B cell (primary cell): ENCODE measurements at regions of chr2 and their contacts with region 1.

Region 1: GRCh38 chr2:74168739-74169138 is 9.9 kb downstream of the MOB1A start:
- DNase-seq: no peak
- ATAC-seq: no peak
- H3K4me3 ChIP-seq: no peak overlapping the region
- H3K4me3 Mint-ChIP-seq: no peak overlapping the region
- H3K27ac ChIP-seq: no peak overlapping the region
- H3K27ac Mint-ChIP-seq: peak overlapping the region; percentile 1
- H3K4me1 ChIP-seq: peaks cover 13% of the 10 kb centered on the region in 2 donors
- H3K4me1 Mint-ChIP-seq: peaks cover 20% of the 10 kb centered on the region
- H3K27me3 ChIP-seq: no peaks in the 10 kb centered on the region
- H3K27me3 Mint-ChIP-seq: no peaks in the 10 kb centered on the region
- CTCF ChIP-seq: no peak

Region 2: GRCh38 chr2:73431037-73431436 is 737.7 kb before region 1 on chr2:
- CTCF ChIA-PET with region 1: no interaction called
- POLR2A ChIA-PET with region 1: no interaction called
- intact Hi-C with region 1: no loop called
- DNase-seq: no peak
- ATAC-seq: no peak
- H3K4me3 ChIP-seq: no peak overlapping the region
- H3K4me3 Mint-ChIP-seq: no peak overlapping the region
- H3K27ac ChIP-seq: no peak overlapping the region
- H3K27ac Mint-ChIP-seq: no peak overlapping the region
- H3K4me1 ChIP-seq: no peaks in the 10 kb centered on the region
- H3K4me1 Mint-ChIP-seq: no peaks in the 10 kb centered on the region
- H3K27me3 ChIP-seq: no peaks in the 10 kb centered on the region
- H3K27me3 Mint-ChIP-seq: no peaks in the 10 kb centered on the region
- CTCF ChIP-seq: no peak

Region 3: GRCh38 chr2:74206180-74206688 is 37.5 kb after region 1 on chr2:
- CTCF ChIA-PET with region 1: interaction called, 4 read pairs
- POLR2A ChIA-PET with region 1: no interaction called
- intact Hi-C with region 1: loop called (anchors 5 kb)
- DNase-seq: peak; percentile 69
- ATAC-seq: peak; percentile 70
- H3K4me3 ChIP-seq: peak overlapping the region in 3 of 5 experiments; percentile 0 to 17 (median 5)
- H3K4me3 Mint-ChIP-seq: peak overlapping the region; percentile 47
- H3K27ac ChIP-seq: peak overlapping the region; percentile 76 to 80
- H3K27ac Mint-ChIP-seq: peak overlapping the region; percentile 88
- H3K4me1 ChIP-seq: peaks cover 24 to 26% of the 10 kb centered on the region in 2 donors
- H3K4me1 Mint-ChIP-seq: peaks cover 31% of the 10 kb centered on the region
- H3K27me3 ChIP-seq: no peaks in the 10 kb centered on the region
- H3K27me3 Mint-ChIP-seq: no peaks in the 10 kb centered on the region
- CTCF ChIP-seq: no peak

Region 4: GRCh38 chr2:74472086-74472944 is 303.6 kb after region 1 on chr2 and contains the start of gene MRPL53:
- CTCF ChIA-PET with region 1: no interaction called
- POLR2A ChIA-PET with region 1: interaction called, 16 read pairs
- intact Hi-C with region 1: no loop called
- DNase-seq: peak; percentile 97
- ATAC-seq: peak; percentile 93
- H3K4me3 ChIP-seq: peak within 1 kb of the TSS; percentile 65 to 89 (median 67)
- H3K4me3 Mint-ChIP-seq: peak within 1 kb of the TSS; percentile 99
- H3K27ac ChIP-seq: peak within 1 kb of the TSS; percentile 69 to 94
- H3K27ac Mint-ChIP-seq: peak within 1 kb of the TSS; percentile 99
- H3K4me1 ChIP-seq: peaks cover 16 to 22% of the 10 kb centered on the region in 2 donors
- H3K4me1 Mint-ChIP-seq: peaks cover 20% of the 10 kb centered on the region
- H3K27me3 ChIP-seq: no peaks in the 10 kb centered on the region
- H3K27me3 Mint-ChIP-seq: no peaks in the 10 kb centered on the region
- CTCF ChIP-seq: no peak
- total RNA-seq, gene MRPL53: 61.5 and 70.0 TPM in 2 replicates

Region 5: GRCh38 chr2:74632209-74632938 is 463.6 kb after region 1 on chr2:
- CTCF ChIA-PET with region 1: no interaction called
- POLR2A ChIA-PET with region 1: no interaction called
- intact Hi-C with region 1: no loop called
- DNase-seq: no peak
- ATAC-seq: no peak
- H3K4me3 ChIP-seq: no peak overlapping the region
- H3K4me3 Mint-ChIP-seq: no peak overlapping the region
- H3K27ac ChIP-seq: no peak overlapping the region
- H3K27ac Mint-ChIP-seq: no peak overlapping the region
- H3K4me1 ChIP-seq: no peaks in the 10 kb centered on the region
- H3K4me1 Mint-ChIP-seq: no peaks in the 10 kb centered on the region
- H3K27me3 ChIP-seq: no peaks in the 10 kb centered on the region
- H3K27me3 Mint-ChIP-seq: peaks cover 14% of the 10 kb centered on the region
- CTCF ChIP-seq: no peak